ENCODE measurements at regions of chr20 and their contacts with region 1.

Region 1: GRCh38 chr20:5090191-5090590 is 29.6 kb downstream of the PCNA start:
- DNase-seq: no peak
- H3K4me3 ChIP-seq: no peak overlapping the region
- H3K27ac ChIP-seq: no peak overlapping the region
- H3K4me1 ChIP-seq: no peaks in the 10 kb centered on the region
- H3K27me3 ChIP-seq: no peaks in the 10 kb centered on the region
- CTCF ChIP-seq: no peak
- EP300 ChIP-seq: no peak
- POLR2A ChIP-seq: no peak
- RAD21 ChIP-seq: no peak

Region 2: DNA sequence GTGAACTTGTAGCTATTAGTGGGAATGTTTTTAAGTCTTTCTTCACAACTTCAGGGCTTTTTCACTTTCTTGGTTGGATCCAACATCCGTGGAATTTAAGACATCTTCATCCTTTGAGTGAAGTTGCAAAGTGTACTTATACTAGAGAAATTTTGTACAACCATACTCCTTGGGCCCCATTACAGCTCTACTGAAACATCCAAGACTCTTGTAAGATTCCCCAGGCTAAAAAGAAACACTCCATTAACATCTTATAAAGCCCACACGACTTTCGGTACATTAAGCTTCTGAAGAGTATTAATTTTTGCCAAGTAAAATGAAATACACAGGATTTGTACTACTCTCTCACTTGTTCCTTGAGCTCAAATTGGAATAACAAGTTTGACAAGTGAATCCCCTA is 24.2 kb after region 1 on chr20:
- CTCF ChIA-PET with region 1: interaction called, 3 read pairs
- POLR2A ChIA-PET with region 1: interaction called, 11 read pairs
- DNase-seq: no peak
- H3K4me3 ChIP-seq: no peak overlapping the region
- H3K27ac ChIP-seq: no peak overlapping the region
- H3K4me1 ChIP-seq: no peaks in the 10 kb centered on the region; a peak in 1 of 7 replicates
- H3K27me3 ChIP-seq: no peaks in the 10 kb centered on the region
- CTCF ChIP-seq: no peak
- EP300 ChIP-seq: no peak
- POLR2A ChIP-seq: peak in 1 of 2 experiments; percentile 69; a peak in 2 of 3 replicates
- RAD21 ChIP-seq: no peak

Region 3: GRCh38 chr20:5168651-5169396 is 78.6 kb after region 1 on chr20:
- CTCF ChIA-PET with region 1: no interaction called
- POLR2A ChIA-PET with region 1: no interaction called
- DNase-seq: no peak
- H3K4me3 ChIP-seq: no peak overlapping the region
- H3K27ac ChIP-seq: no peak overlapping the region
- H3K4me1 ChIP-seq: peaks cover 8 to 24% (median 14%) of the 10 kb centered on the region in 4 experiments; a peak in 5 of 7 replicates
- H3K27me3 ChIP-seq: no peaks in the 10 kb centered on the region
- CTCF ChIP-seq: no peak
- EP300 ChIP-seq: no peak
- POLR2A ChIP-seq: no peak
- RAD21 ChIP-seq: no peak

Measured in H1 (cell line).